ENCODE measurements at regions of chr6 and their contacts with region 1.

Region 1: DNA sequence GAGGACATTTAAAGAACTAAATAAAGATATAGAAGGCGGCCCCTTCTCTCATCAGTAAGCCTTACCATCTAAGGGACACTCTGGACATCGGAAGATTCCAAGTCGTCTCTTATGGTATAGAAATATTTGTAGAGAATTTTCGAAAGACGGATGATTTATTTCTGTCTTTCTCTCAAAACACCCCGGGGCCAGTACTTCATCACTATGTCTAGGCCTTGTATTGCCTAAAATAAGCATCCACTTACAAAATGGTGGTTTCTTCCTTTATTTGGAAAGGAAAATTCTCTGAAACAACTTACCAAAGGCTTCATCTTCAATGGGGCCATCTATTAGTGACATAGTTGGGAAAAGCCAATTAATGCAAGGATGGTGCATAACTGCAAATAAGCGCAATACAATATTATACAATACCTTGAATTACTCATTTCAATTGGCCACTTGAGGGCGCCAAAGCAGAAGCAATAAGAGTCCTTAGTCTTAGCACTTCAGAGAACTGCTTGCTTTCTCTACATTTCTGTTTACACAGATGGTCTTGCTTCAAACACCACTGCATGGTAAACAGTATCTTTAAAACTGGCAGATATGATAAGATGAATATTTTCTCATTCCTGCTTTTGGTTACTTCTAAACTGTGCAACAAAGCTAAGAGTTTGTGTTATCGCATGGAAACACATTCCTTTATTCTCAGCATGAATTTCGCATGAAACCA is 113.2 kb downstream of the VIP start:
- DNase-seq: no peak
- H3K4me3 ChIP-seq: no peak overlapping the region
- H3K27ac ChIP-seq: no peak overlapping the region
- H3K4me1 ChIP-seq: no peaks in the 10 kb centered on the region
- H3K27me3 ChIP-seq: no peaks in the 10 kb centered on the region
- CTCF ChIP-seq: peak; percentile 13 to 53 (median 32)
- EP300 ChIP-seq: no peak
- POLR2A ChIP-seq: no peak

Region 2: DNA sequence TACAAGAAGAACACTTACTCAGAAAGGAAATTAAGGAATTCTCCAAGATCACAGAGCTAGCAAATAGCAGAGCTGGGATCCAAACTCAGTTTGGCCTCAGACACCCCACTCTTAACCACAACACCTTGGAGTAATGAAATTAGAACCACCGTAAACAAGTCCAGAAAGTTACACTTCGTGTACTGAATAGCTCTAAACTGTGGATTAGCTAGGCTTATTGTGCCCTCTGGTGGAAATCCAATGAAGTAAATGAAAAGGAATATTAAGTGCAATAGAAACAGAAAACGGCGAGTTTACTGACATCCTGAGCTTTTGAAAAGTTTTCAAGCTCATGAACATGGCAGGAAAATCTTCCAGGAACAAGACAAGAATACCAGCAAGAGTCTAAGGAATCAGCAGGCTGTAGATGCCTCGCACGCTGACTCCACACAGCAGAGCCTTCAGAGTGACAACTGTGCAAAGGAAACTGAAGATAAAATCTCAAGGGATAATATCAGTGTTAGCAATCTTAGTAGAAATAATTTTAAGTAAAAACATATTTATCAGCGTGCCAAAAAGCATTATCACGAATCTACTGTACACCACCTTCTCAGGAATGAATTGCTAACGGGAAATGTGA is 84.5 kb after region 1 on chr6:
- intact Hi-C with region 1: loop called (anchors 5 kb)
- DNase-seq: no peak
- H3K4me3 ChIP-seq: no peak overlapping the region
- H3K27ac ChIP-seq: no peak overlapping the region
- H3K4me1 ChIP-seq: no peaks in the 10 kb centered on the region
- H3K27me3 ChIP-seq: no peaks in the 10 kb centered on the region
- CTCF ChIP-seq: peak in 3 of 4 experiments; percentile 48 to 64 (median 50)
- EP300 ChIP-seq: no peak
- POLR2A ChIP-seq: no peak

Region 3: DNA sequence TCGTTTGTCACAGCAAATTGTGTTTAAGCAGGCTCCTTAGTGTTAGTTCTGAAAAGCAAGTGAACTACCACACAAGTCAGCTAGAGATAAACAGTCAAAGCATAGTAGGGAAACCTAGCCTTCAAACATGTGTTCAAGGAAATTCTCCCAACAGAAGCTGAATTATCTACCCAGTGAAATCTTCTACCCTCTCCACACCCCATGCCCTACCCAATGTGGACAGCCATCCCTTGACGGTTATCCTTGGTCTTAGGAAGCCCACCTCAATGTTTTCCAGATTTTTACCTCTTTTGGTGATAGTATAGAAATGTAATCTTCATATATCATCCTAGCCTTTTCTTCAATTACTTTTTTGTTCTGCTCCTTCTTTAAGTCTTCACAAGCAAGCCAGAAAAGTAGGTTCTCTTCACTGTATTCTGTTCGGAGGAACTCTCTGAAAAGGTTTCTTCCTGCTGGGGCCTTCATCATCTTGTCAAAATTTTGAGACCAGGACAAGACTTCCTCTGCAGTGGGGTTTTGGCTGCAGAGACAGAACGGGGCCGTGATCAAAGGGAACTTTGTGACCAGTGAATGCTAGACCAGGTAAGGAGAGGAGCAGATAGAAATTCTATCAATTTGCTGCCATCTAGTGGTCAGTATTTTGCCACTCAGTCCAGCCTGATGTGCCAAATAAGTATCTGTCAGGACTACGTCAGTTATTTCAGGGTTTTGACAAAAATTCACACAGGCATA is 160.4 kb after region 1 on chr6:
- intact Hi-C with region 1: loop called (anchors 2 kb)
- DNase-seq: no peak
- H3K4me3 ChIP-seq: no peak overlapping the region
- H3K27ac ChIP-seq: no peak overlapping the region
- H3K4me1 ChIP-seq: no peaks in the 10 kb centered on the region
- H3K27me3 ChIP-seq: no peaks in the 10 kb centered on the region
- CTCF ChIP-seq: peak in 3 of 4 experiments; percentile 53 to 74 (median 55)
- EP300 ChIP-seq: no peak
- POLR2A ChIP-seq: no peak

Measured in sigmoid colon (tissue), 7 donors.